SK-N-SH (cell line): ENCODE measurements at regions of chr1 and their contacts with region 1.

Region 1: DNA sequence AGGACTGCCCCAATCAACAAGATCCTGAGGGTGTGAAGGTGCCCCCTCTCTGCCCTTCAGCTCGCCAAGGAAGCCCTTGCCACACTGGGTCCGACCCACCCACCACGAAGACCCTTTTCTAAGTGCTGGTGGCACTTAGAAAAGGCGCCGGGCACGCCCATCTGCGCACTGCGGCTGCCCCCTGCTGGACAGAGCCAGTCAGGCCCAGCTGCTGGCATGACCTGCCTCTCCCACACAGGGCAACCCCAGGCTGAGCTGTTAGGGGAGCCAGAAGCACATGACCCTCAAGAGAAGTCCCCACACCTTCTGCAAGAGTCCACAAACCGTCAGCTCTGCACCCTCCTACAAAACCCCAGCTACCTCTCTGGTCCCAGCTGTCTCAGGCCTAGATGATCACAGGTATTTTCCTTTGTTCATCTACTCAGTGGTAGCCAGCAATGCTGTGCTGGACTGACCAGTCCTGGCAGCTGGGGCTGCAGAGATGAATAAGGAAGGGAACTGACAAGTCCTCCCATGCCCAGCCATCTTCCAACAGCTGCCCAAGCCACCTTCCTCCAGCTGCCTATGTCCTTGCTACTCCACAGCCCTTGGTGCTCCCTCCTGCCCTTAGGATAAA is 40.0 kb upstream of the ZC3H12A start:
- DNase-seq: peak; percentile 90
- H3K4me3 ChIP-seq: no peak overlapping the region; a peak in 1 of 4 replicates
- H3K27ac ChIP-seq: no peak overlapping the region
- H3K4me1 ChIP-seq: no peaks in the 10 kb centered on the region
- H3K27me3 ChIP-seq: peaks cover 19% of the 10 kb centered on the region; the same call in 1 of the 2 replicates
- CTCF ChIP-seq: peak; percentile 94
- EP300 ChIP-seq: no peak
- RAD21 ChIP-seq: peak; percentile 93

Region 2: DNA sequence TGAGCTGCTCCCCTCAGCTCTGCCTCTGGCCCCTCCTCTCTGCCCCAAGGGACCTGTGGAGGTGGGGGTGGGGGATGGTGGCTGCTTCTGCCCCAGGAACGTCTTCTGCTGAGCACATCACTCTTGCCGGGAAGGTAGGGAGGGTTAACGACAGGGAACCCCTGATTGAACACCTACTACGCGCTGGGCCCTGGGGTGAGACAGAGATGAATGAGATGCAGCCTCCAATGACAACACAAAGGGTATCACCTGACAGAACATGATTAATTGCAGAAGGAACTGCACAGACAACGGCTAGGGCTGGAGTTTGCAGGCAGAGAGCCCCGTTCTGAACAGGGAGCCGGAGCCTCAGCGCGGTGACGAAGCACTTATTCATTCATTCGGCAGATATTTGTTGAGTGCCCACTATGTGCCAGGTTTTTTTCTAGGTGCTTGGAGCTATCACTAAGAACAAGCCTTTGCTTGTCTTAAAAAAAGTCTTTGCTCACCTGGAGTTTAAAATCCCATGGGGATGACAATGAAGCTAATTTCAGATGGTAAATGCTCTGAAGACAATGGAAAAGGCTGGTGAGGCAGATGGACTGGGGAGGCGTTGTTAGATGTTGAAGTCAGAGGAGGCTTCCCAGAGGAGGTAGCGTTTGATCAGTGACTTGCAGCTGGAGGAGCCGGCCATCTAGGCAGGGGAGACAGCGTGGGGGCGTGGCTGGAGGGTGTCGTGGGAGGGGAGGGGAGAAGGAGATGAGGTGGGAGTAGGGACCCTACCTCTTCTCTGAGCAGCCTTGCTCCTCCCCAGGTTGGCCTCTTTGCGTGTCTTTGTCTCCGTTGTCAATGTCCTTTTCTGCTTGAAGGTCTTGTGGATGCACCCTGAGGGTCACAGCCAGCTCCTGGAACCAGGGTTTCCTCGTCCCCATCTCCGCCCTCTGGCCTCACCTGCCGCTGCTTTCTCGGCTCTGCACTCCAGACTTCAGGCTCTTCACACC is 848.5 kb before region 1 on chr1:
- CTCF ChIA-PET with region 1: interaction called, 15 read pairs
- POLR2A ChIA-PET with region 1: no interaction called
- DNase-seq: no peak
- H3K4me3 ChIP-seq: no peak overlapping the region
- H3K27ac ChIP-seq: no peak overlapping the region
- H3K4me1 ChIP-seq: no peaks in the 10 kb centered on the region
- H3K27me3 ChIP-seq: no peaks in the 10 kb centered on the region
- CTCF ChIP-seq: no peak
- EP300 ChIP-seq: no peak
- RAD21 ChIP-seq: no peak

Region 3: GRCh38 chr1:37323486-37324377 is 110.7 kb before region 1 on chr1:
- CTCF ChIA-PET with region 1: interaction called, 12 read pairs
- POLR2A ChIA-PET with region 1: no interaction called
- DNase-seq: peak; percentile 76
- H3K4me3 ChIP-seq: peak overlapping the region in 1 of 2 experiments; percentile 45; a peak in 1 of 4 replicates
- H3K27ac ChIP-seq: no peak overlapping the region
- H3K4me1 ChIP-seq: no peaks in the 10 kb centered on the region
- H3K27me3 ChIP-seq: no peaks in the 10 kb centered on the region
- CTCF ChIP-seq: peak; percentile 54
- EP300 ChIP-seq: no peak
- RAD21 ChIP-seq: peak; percentile 77

Region 4: GRCh38 chr1:37449936-37450335 is 15.5 kb after region 1 on chr1:
- CTCF ChIA-PET with region 1: interaction called, 18 read pairs
- POLR2A ChIA-PET with region 1: no interaction called
- DNase-seq: no peak
- H3K4me3 ChIP-seq: no peak overlapping the region
- H3K27ac ChIP-seq: no peak overlapping the region
- H3K4me1 ChIP-seq: no peaks in the 10 kb centered on the region; a peak in 1 of 4 replicates
- H3K27me3 ChIP-seq: no peaks in the 10 kb centered on the region
- CTCF ChIP-seq: no peak
- EP300 ChIP-seq: no peak
- RAD21 ChIP-seq: no peak

Region 5: DNA sequence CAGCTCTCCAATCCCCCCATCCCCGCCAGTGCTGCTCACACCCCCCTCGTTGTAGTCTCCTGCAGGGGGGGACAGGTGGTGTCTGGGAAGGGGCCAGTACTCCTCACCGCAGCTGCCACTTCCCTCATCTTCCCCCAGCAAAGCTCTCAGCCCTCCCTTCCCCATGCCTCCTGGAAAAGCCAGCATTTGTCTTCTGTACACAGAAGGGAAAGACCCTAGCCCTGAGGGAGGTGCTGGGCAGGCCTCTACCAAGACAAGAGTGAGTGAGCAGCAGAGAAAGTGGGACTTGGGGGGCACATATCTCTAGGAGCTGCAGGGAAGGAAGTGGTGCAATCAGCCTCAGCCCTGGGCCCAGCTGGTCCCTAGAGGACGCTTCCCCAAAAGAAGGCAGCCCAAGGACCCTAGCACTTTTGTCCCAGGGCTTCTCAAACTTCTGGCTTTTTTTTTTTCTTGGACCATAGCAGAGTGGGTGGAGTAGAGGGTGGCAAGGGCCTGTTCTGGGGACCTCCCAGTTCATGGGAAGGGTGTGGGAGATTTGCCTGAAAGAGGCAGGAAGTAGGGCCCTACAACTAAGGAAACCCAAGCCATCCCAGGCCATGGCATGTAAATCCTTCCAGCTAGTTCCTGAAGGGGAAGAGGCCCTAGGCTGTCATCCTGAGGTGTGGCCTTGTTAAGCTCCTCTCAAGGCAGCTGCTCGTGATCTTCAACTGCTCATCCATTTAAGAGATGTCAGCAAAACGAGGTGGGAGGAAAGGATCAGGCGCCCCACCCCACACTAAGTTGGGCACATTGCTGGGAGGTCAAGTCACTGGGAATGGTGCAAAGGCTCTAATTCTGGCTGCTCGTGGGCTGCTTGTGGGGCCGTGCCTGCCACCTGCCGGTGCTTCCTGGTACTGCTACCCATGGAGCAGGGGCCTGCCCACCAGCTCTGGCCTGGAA is 52.5 kb after region 1 on chr1:
- CTCF ChIA-PET with region 1: interaction called, 31 read pairs
- POLR2A ChIA-PET with region 1: no interaction called
- DNase-seq: peak; percentile 83
- H3K4me3 ChIP-seq: peak overlapping the region in 1 of 2 experiments; percentile 1; a peak in 1 of 4 replicates
- H3K27ac ChIP-seq: peak overlapping the region; percentile 5 to 13; a peak in 1 of 4 replicates
- H3K4me1 ChIP-seq: peaks cover 0 to 30% of the 10 kb centered on the region in 2 experiments; a peak in 1 of 4 replicates
- H3K27me3 ChIP-seq: no peaks in the 10 kb centered on the region
- CTCF ChIP-seq: peak; percentile 97
- EP300 ChIP-seq: no peak
- RAD21 ChIP-seq: peak; percentile 83